T-cell (primary cell): ENCODE measurements at regions of chr13 and their contacts with region 1.

Region 1: GRCh38 chr13:100899720-100900316 is 225.2 kb upstream of the TMTC4 start:
- DNase-seq: no peak
- ATAC-seq: no peak
- H3K4me3 ChIP-seq: no peak overlapping the region
- H3K4me3 Mint-ChIP-seq: no peak overlapping the region
- H3K27ac ChIP-seq: no peak overlapping the region
- H3K27ac Mint-ChIP-seq: no peak overlapping the region
- H3K4me1 ChIP-seq: no peaks in the 10 kb centered on the region
- H3K4me1 Mint-ChIP-seq: no peaks in the 10 kb centered on the region
- H3K27me3 ChIP-seq: no peaks in the 10 kb centered on the region
- H3K27me3 Mint-ChIP-seq: peaks cover 12 to 15% of the 10 kb centered on the region in 2 donors

Region 2: GRCh38 chr13:99498171-99499161 is 1401.4 kb before region 1 on chr13:
- CTCF ChIA-PET with region 1: no interaction called
- POLR2A ChIA-PET with region 1: no interaction called
- DNase-seq: peak; percentile 87 to 97 (median 94)
- ATAC-seq: peak; percentile 70 to 76 (median 73)
- H3K4me3 ChIP-seq: peak overlapping the region; percentile 59 to 62
- H3K4me3 Mint-ChIP-seq: peak overlapping the region; percentile 82 to 98 (median 91)
- H3K27ac ChIP-seq: peak overlapping the region; percentile 93
- H3K27ac Mint-ChIP-seq: peak overlapping the region; percentile 98 to 99
- H3K4me1 ChIP-seq: peaks cover 44 to 64% of the 10 kb centered on the region in 2 experiments
- H3K4me1 Mint-ChIP-seq: peaks cover 74 to 89% (median 84%) of the 10 kb centered on the region in 3 donors
- H3K27me3 ChIP-seq: no peaks in the 10 kb centered on the region
- H3K27me3 Mint-ChIP-seq: no peaks in the 10 kb centered on the region

Region 3: GRCh38 chr13:100913143-100913542 is 13.3 kb after region 1 on chr13:
- CTCF ChIA-PET with region 1: no interaction called
- POLR2A ChIA-PET with region 1: no interaction called
- DNase-seq: no peak
- ATAC-seq: no peak
- H3K4me3 ChIP-seq: no peak overlapping the region
- H3K4me3 Mint-ChIP-seq: no peak overlapping the region
- H3K27ac ChIP-seq: no peak overlapping the region
- H3K27ac Mint-ChIP-seq: no peak overlapping the region
- H3K4me1 ChIP-seq: no peaks in the 10 kb centered on the region
- H3K4me1 Mint-ChIP-seq: no peaks in the 10 kb centered on the region
- H3K27me3 ChIP-seq: no peaks in the 10 kb centered on the region
- H3K27me3 Mint-ChIP-seq: peaks cover 12 to 25% of the 10 kb centered on the region in 2 donors

Region 4: DNA sequence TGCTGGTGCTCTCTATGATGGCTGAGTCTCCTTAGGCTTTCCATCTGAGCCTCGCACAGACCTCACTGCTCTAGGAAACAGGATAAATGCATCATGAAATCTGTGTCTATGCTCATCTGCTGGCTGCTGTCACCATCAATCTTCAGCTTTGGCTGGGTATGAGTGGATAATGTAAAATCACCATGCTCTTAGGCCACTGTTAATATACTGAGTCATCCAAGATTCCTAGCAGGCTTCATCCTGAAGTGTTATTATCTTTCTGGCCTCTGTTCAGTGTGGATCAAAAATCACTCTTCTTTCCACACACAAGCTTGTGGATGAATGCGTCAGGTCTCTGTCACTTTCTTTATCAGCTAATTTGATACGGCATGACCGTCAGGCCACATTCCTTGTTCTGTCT is 199.1 kb after region 1 on chr13:
- CTCF ChIA-PET with region 1: no interaction called
- POLR2A ChIA-PET with region 1: interaction called in 1 of 2 experiments, 12 read pairs
- DNase-seq: no peak
- ATAC-seq: no peak
- H3K4me3 ChIP-seq: no peak overlapping the region
- H3K4me3 Mint-ChIP-seq: no peak overlapping the region
- H3K27ac ChIP-seq: no peak overlapping the region
- H3K27ac Mint-ChIP-seq: no peak overlapping the region
- H3K4me1 ChIP-seq: no peaks in the 10 kb centered on the region
- H3K4me1 Mint-ChIP-seq: no peaks in the 10 kb centered on the region
- H3K27me3 ChIP-seq: peaks cover 0 to 2% of the 10 kb centered on the region in 2 experiments
- H3K27me3 Mint-ChIP-seq: peaks cover 8 to 32% of the 10 kb centered on the region in 2 donors